Ascending aorta (tissue), 2 donors: ENCODE measurements at regions of chr15 and their contacts with region 1.

Region 1: DNA sequence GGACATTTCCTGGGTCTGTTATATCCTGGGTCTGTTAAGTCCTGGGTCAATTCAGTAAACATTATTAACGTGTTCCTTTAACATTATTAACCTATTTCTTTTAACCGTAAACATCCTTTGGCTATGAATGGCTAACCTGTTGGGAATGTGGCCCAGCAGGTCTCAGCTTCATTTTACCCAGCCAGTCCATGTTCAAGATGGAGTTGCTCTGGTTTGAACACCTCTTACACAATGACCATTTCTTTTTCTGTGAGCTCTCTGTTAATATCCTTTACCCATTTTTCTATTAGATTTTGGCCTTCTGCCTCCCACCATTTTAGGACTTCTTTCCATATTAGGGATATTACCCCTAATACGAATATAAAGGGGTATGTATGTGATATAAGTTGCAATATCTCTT is 88.9 kb upstream of the NEDD4 start:
- DNase-seq: no peak
- H3K4me3 ChIP-seq: no peak overlapping the region
- H3K27ac ChIP-seq: no peak overlapping the region
- H3K4me1 ChIP-seq: no peaks in the 10 kb centered on the region
- H3K27me3 ChIP-seq: no peaks in the 10 kb centered on the region
- CTCF ChIP-seq: no peak

Region 2: DNA sequence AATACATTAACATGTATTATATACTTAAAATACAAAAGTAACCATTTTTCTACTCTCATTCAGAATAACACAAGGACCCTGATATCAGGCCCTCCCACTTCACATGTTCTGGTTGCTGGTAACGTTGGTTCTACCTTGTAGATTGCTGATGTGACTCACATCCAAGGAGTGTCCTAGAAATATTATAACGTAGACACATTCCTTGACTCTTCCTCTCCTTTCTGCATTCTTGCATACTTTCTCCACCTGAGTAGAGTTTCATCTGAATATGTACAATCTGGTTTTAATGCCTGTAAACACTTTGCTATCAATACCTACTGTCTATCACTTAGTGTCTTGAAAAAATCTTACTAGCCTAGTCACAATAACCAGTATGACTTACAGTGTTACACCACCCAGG is 53.9 kb before region 1 on chr15:
- intact Hi-C with region 1: loop called (anchors 10 kb)
- DNase-seq: no peak
- H3K4me3 ChIP-seq: no peak overlapping the region
- H3K27ac ChIP-seq: no peak overlapping the region
- H3K4me1 ChIP-seq: no peaks in the 10 kb centered on the region
- H3K27me3 ChIP-seq: no peaks in the 10 kb centered on the region
- CTCF ChIP-seq: no peak

Region 3: GRCh38 chr15:56064152-56064551 is 18.2 kb before region 1 on chr15:
- intact Hi-C with region 1: no loop called
- DNase-seq: no peak
- H3K4me3 ChIP-seq: no peak overlapping the region
- H3K27ac ChIP-seq: no peak overlapping the region
- H3K4me1 ChIP-seq: no peaks in the 10 kb centered on the region
- H3K27me3 ChIP-seq: no peaks in the 10 kb centered on the region
- CTCF ChIP-seq: no peak